ENCODE measurements at regions of chr1 and their contacts with region 1.

Region 1: DNA sequence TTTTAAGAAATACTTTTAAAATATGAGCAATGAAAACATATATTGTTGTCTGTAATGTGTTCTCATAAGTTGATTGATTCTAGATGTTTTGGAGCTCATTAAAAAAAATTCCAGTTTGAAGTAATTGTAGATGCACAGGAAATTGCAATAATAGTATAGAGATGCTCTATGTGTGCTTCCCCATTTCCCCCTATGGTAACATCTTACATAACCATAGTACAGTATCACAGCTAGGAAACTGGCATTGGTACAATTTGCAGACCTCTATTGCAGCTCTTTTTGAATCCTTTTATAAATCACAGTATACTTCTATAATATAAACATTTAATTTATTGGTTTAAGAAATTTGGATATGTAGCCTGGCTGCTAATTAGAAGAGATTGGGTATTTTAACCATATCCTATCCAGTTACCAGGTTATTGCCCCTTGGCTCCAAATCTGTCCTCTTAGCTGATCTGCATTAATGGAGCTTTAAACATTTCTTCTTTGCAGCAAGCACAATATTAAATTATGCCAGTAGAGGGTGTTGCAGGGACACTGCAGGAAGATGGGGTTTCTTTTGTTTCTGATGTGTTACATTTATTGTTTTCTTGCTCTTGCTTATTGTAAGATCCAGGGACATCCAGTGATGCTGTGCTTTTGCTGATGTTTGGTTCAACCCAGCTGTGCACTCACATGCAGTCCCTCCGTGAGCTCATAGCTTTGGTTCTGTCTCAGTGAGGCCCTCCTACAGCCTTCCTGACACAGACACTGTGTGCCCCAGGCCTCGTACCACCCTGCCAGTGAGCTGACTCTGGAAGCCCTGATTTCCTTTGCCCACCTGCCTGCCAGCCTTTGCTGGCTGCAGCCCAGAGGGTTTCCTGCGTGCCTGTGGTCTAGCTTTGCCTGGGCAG is 103.3 kb downstream of the RABGAP1L start:
- DNase-seq: peak; percentile 54
- CTCF ChIP-seq: peak; percentile 71

Region 2: GRCh38 chr1:174243451-174244000 is 19.1 kb before region 1 on chr1:
- CTCF ChIA-PET with region 1: interaction called, 10 read pairs
- POLR2A ChIA-PET with region 1: no interaction called
- DNase-seq: no peak
- CTCF ChIP-seq: no peak

Region 3: GRCh38 chr1:174276087-174276486 is 13.5 kb after region 1 on chr1:
- CTCF ChIA-PET with region 1: interaction called, 31 read pairs
- POLR2A ChIA-PET with region 1: no interaction called
- DNase-seq: no peak
- CTCF ChIP-seq: no peak

Region 4: GRCh38 chr1:174726167-174726879 is 463.7 kb after region 1 on chr1:
- CTCF ChIA-PET with region 1: interaction called, 35 read pairs
- POLR2A ChIA-PET with region 1: no interaction called
- DNase-seq: no peak
- CTCF ChIP-seq: peak; percentile 54

Region 5: GRCh38 chr1:174743654-174744561 is 481.3 kb after region 1 on chr1:
- CTCF ChIA-PET with region 1: interaction called, 101 read pairs
- POLR2A ChIA-PET with region 1: no interaction called
- DNase-seq: peak; percentile 31
- CTCF ChIP-seq: peak; percentile 56

Measured in GM10248 (cell line).